ENCODE measurements at regions of chr4 and their contacts with region 1.

Region 1: DNA sequence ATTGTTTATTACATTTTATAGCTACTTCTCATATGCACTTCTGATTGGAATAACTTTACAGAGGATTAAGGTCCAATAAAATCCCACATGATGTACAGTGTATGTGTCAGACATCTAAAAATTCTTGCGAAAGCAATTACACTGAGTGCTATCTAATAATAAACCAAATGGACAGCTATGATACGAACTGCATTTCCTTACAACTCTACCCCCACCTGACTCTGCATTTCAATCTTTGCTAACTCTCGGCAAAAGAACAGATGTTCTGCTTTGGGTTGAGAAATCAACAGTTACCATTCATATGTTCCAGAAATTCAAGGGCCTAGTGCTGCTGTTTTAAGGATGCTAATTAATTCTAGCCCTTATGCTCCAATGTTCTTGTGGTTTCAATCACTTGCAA is 287.9 kb upstream of the NOCT start:
- DNase-seq: no peak
- ATAC-seq: no peak
- H3K4me3 ChIP-seq: no peak overlapping the region
- H3K27ac ChIP-seq: no peak overlapping the region
- H3K4me1 ChIP-seq: no peaks in the 10 kb centered on the region
- H3K27me3 ChIP-seq: peaks cover 12% of the 10 kb centered on the region; the same call in 1 of the 2 replicates
- CTCF ChIP-seq: no peak

Region 2: DNA sequence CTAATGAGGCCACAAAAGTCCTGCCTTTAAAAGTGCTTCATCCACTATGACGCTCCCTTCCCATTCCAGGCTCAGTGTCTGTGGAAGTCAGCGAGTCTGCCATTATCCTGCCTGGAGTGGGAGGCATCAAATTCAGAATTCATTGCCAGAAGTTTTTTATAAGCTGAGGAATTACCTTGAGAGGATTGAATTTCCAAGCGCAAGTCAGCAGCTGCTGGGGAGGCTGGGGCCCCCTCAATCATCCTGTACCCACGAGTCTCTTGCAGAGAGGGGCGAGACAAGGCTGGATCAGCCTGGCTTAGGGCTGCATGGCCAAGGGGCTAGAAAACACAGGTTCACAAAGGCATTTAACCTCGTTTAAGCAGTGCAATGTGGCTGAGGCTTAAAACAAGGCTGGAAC is 117.3 kb after region 1 on chr4:
- CTCF ChIA-PET with region 1: no interaction called
- POLR2A ChIA-PET with region 1: no interaction called
- intact Hi-C with region 1: loop called (anchors 10 kb)
- DNase-seq: no peak
- ATAC-seq: no peak
- H3K4me3 ChIP-seq: no peak overlapping the region
- H3K27ac ChIP-seq: no peak overlapping the region
- H3K4me1 ChIP-seq: no peaks in the 10 kb centered on the region
- H3K27me3 ChIP-seq: peaks cover 20% of the 10 kb centered on the region; the same call in 1 of the 2 replicates
- CTCF ChIP-seq: no peak